Activated CD8-positive, alpha-beta T cell treated with anti-CD3 and anti-CD28 coated beads for 36 hours (primary cell): ENCODE measurements at regions of chr2 and their contacts with region 1.

Region 1: GRCh38 chr2:8872821-8873432 is 35.5 kb upstream of the KIDINS220 start:
- DNase-seq: no peak
- ATAC-seq: no peak
- H3K4me3 Mint-ChIP-seq: no peak overlapping the region
- H3K27ac Mint-ChIP-seq: no peak overlapping the region
- H3K4me1 Mint-ChIP-seq: no peaks in the 10 kb centered on the region
- H3K27me3 Mint-ChIP-seq: peaks cover 1% of the 10 kb centered on the region
- CTCF ChIP-seq: peak; percentile 51

Region 2: GRCh38 chr2:8693155-8693821 is 179.6 kb before region 1 on chr2:
- CTCF ChIA-PET with region 1: no interaction called
- POLR2A ChIA-PET with region 1: no interaction called
- intact Hi-C with region 1: no loop called
- DNase-seq: peak; percentile 59
- ATAC-seq: peak; percentile 83
- H3K4me3 Mint-ChIP-seq: no peak overlapping the region
- H3K27ac Mint-ChIP-seq: no peak overlapping the region
- H3K4me1 Mint-ChIP-seq: peaks cover 3% of the 10 kb centered on the region
- H3K27me3 Mint-ChIP-seq: peaks cover 24% of the 10 kb centered on the region
- CTCF ChIP-seq: peak; percentile 85

Region 3: GRCh38 chr2:8862230-8862629 is 10.7 kb before region 1 on chr2:
- CTCF ChIA-PET with region 1: interaction called, 14 read pairs
- POLR2A ChIA-PET with region 1: no interaction called
- intact Hi-C with region 1: no loop called
- DNase-seq: no peak
- ATAC-seq: no peak
- H3K4me3 Mint-ChIP-seq: no peak overlapping the region
- H3K27ac Mint-ChIP-seq: no peak overlapping the region
- H3K4me1 Mint-ChIP-seq: no peaks in the 10 kb centered on the region
- H3K27me3 Mint-ChIP-seq: no peaks in the 10 kb centered on the region
- CTCF ChIP-seq: no peak

Region 4: GRCh38 chr2:9030841-9031240 is 157.9 kb after region 1 on chr2:
- CTCF ChIA-PET with region 1: no interaction called
- POLR2A ChIA-PET with region 1: no interaction called
- intact Hi-C with region 1: no loop called
- DNase-seq: no peak
- ATAC-seq: no peak
- H3K4me3 Mint-ChIP-seq: no peak overlapping the region
- H3K27ac Mint-ChIP-seq: no peak overlapping the region
- H3K4me1 Mint-ChIP-seq: peaks cover 6% of the 10 kb centered on the region
- H3K27me3 Mint-ChIP-seq: peaks cover 10% of the 10 kb centered on the region
- CTCF ChIP-seq: no peak

Region 5: GRCh38 chr2:9139491-9140443 is 266.8 kb after region 1 on chr2:
- CTCF ChIA-PET with region 1: interaction called, 8 read pairs
- POLR2A ChIA-PET with region 1: no interaction called
- intact Hi-C with region 1: loop called (anchors 5 kb)
- DNase-seq: peak; percentile 83
- ATAC-seq: peak; percentile 48
- H3K4me3 Mint-ChIP-seq: no peak overlapping the region
- H3K27ac Mint-ChIP-seq: no peak overlapping the region
- H3K4me1 Mint-ChIP-seq: peaks cover 2% of the 10 kb centered on the region
- H3K27me3 Mint-ChIP-seq: peaks cover 9% of the 10 kb centered on the region
- CTCF ChIP-seq: peak; percentile 72